ENCODE measurements at regions of chr2 and their contacts with region 1.

Region 1: GRCh38 chr2:101831351-101831865 is 133.9 kb downstream of the MAP4K4 start:
- DNase-seq: peak; percentile 85
- H3K4me3 ChIP-seq: no peak overlapping the region
- H3K27ac ChIP-seq: peak overlapping the region; percentile 18
- H3K4me1 ChIP-seq: peaks cover 33% of the 10 kb centered on the region
- H3K27me3 ChIP-seq: no peaks in the 10 kb centered on the region
- CTCF ChIP-seq: peak; percentile 68 to 74
- POLR2A ChIP-seq: no peak

Region 2: DNA sequence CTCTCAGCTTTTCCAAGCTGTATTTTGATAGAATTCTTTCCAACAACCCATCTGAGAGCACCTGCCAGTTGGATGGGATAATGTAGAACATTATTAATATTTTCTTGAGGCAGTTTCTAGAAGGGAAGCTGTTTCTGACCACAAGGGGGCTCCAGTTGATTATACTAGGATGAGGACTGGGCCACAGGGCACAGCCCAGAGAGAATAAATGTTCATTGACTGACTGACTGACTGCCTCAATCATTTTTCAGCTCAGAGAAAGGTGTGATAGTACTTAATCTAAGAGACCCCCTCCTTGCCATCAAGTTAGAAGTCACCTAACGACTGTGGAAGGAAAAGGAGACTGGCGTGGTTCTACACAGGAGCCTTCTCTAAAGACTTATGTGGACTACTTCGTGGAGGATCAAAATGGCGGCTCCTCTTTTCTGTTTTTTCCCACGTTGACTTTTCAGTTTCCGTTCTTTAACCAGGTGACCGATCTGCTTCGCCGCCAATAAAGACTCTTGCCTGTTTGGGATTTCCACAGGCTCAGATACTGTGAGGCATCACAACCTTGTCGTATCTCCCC is 412.2 kb before region 1 on chr2:
- CTCF ChIA-PET with region 1: interaction called, 63 read pairs
- POLR2A ChIA-PET with region 1: no interaction called
- dilution Hi-C with region 1: no loop called
- intact Hi-C with region 1: loop called (anchors 1 kb)
- DNase-seq: peak; percentile 69
- H3K4me3 ChIP-seq: no peak overlapping the region
- H3K27ac ChIP-seq: no peak overlapping the region
- H3K4me1 ChIP-seq: no peaks in the 10 kb centered on the region
- H3K27me3 ChIP-seq: no peaks in the 10 kb centered on the region
- CTCF ChIP-seq: peak; percentile 59 to 63
- POLR2A ChIP-seq: no peak

Region 3: GRCh38 chr2:101697124-101698013 is 134.0 kb before region 1 on chr2 and contains the start of gene MAP4K4:
- CTCF ChIA-PET with region 1: interaction called, 64 read pairs
- POLR2A ChIA-PET with region 1: interaction called, 7 read pairs
- dilution Hi-C with region 1: no loop called
- intact Hi-C with region 1: loop called (anchors 1 kb)
- DNase-seq: peak; percentile 67
- H3K4me3 ChIP-seq: peak within 1 kb of the TSS; percentile 55 to 98 (median 96)
- H3K27ac ChIP-seq: peak within 1 kb of the TSS; percentile 85
- H3K4me1 ChIP-seq: peaks cover 20% of the 10 kb centered on the region
- H3K27me3 ChIP-seq: no peaks in the 10 kb centered on the region
- CTCF ChIP-seq: peak in 1 of 2 donors; percentile 11
- POLR2A ChIP-seq: peak; percentile 88
- total RNA-seq, gene MAP4K4: 251 and 269 TPM in 2 replicates

Region 4: GRCh38 chr2:101725515-101726192 is 105.8 kb before region 1 on chr2:
- CTCF ChIA-PET with region 1: interaction called, 17 read pairs
- POLR2A ChIA-PET with region 1: no interaction called
- dilution Hi-C with region 1: no loop called
- intact Hi-C with region 1: no loop called
- DNase-seq: no peak
- H3K4me3 ChIP-seq: no peak overlapping the region
- H3K27ac ChIP-seq: no peak overlapping the region
- H3K4me1 ChIP-seq: peaks cover 3% of the 10 kb centered on the region
- H3K27me3 ChIP-seq: no peaks in the 10 kb centered on the region
- CTCF ChIP-seq: peak in 1 of 2 donors; percentile 10
- POLR2A ChIP-seq: no peak

Region 5: DNA sequence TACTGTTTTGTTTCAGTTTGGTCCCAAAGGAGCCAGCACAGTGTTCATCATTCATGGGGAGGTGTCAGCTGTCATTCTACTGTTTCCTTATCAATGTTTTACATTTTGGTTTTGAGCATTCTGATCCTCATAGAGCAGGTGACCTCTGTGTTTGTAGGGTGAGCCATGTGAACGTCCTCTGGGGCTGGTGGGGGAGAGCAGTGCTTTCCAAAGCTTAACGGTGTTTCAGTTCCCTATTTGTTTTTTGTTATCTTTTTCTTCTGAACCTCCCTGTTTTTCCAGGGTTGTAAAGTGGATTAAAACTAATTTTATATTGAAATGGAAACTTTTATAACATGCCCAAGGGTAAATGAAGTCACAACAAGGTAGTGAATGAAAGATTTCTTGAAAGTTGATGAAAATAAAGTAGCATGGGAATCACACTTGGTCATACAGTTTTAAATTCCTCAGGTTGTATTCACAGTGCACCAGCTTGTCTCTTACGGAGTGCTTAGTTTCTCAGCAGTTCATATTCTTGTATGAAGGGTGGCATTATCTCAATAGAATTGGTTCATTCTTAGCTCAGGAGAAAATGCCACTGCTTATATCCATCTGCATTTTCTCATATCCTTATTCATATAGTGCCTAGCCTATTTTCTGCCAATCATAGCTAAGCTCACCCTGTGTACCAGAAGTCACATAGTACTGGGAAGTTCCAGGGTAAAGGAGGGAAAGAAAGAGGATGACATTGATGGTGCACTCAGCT is 79.4 kb before region 1 on chr2:
- CTCF ChIA-PET with region 1: interaction called, 13 read pairs
- POLR2A ChIA-PET with region 1: no interaction called
- dilution Hi-C with region 1: no loop called
- intact Hi-C with region 1: no loop called
- DNase-seq: no peak
- H3K4me3 ChIP-seq: no peak overlapping the region
- H3K27ac ChIP-seq: no peak overlapping the region
- H3K4me1 ChIP-seq: peaks cover 39% of the 10 kb centered on the region
- H3K27me3 ChIP-seq: no peaks in the 10 kb centered on the region
- CTCF ChIP-seq: no peak
- POLR2A ChIP-seq: no peak

Region 6: GRCh38 chr2:101806123-101806522 is 25.3 kb before region 1 on chr2:
- CTCF ChIA-PET with region 1: interaction called, 10 read pairs
- POLR2A ChIA-PET with region 1: no interaction called
- dilution Hi-C with region 1: no loop called
- intact Hi-C with region 1: no loop called
- DNase-seq: peak; percentile 83
- H3K4me3 ChIP-seq: peak overlapping the region in 1 of 3 experiments; percentile 10
- H3K27ac ChIP-seq: peak overlapping the region; percentile 36
- H3K4me1 ChIP-seq: peaks cover 46% of the 10 kb centered on the region
- H3K27me3 ChIP-seq: no peaks in the 10 kb centered on the region
- CTCF ChIP-seq: no peak
- POLR2A ChIP-seq: no peak

Region 7: GRCh38 chr2:102122110-102122509 is 290.7 kb after region 1 on chr2:
- CTCF ChIA-PET with region 1: no interaction called
- POLR2A ChIA-PET with region 1: no interaction called
- dilution Hi-C with region 1: no loop called
- intact Hi-C with region 1: no loop called
- DNase-seq: no peak
- H3K4me3 ChIP-seq: no peak overlapping the region
- H3K27ac ChIP-seq: no peak overlapping the region
- H3K4me1 ChIP-seq: no peaks in the 10 kb centered on the region
- H3K27me3 ChIP-seq: no peaks in the 10 kb centered on the region
- CTCF ChIP-seq: no peak
- POLR2A ChIP-seq: no peak

Measured in endothelial cell of umbilical vein (primary cell).